ENCODE measurements at regions of chr7 and their contacts with region 1.

Region 1: DNA sequence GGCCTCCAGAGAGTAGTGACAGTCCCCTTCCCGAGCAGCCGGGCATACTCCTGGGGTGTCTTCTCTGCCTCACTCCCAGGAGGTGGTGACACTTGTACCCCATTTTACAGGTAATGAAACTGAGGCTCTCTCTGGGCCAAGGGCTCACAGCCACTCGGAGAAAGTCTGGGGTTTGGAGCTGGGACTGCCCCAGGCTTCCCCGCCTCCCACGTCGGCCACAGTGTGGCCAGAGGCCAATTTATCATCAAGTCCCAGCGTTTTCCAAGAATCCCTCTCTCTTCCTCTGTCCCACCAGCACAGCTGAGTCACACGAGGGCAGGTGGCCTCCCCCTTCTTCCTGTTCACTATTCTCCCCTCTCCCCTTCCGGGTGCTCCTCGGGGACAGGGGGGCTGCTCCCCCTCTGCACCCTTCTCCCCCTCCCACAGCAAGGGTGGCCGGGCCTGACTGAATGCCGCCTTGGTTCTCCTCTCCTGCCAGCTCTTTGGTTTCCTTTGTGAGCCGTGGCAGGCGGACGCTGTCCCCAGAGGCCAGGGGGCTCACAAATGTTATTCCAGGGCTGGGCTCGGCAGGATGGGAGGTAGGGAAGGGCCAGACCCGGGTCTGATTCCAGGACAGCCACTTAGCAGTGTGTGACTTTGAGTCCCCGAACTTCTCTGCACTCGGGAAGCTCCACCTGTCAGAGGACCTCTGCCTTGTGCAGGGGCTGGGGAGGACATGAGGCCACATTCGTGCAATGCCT is 17.7 kb downstream of the CLIP2 start:
- DNase-seq: no peak
- ATAC-seq: peak; percentile 34
- H3K4me3 Mint-ChIP-seq: peak overlapping the region; percentile 64
- H3K27ac Mint-ChIP-seq: no peak overlapping the region
- H3K4me1 Mint-ChIP-seq: peaks cover 37% of the 10 kb centered on the region
- H3K27me3 Mint-ChIP-seq: no peaks in the 10 kb centered on the region
- CTCF ChIP-seq: no peak

Region 2: DNA sequence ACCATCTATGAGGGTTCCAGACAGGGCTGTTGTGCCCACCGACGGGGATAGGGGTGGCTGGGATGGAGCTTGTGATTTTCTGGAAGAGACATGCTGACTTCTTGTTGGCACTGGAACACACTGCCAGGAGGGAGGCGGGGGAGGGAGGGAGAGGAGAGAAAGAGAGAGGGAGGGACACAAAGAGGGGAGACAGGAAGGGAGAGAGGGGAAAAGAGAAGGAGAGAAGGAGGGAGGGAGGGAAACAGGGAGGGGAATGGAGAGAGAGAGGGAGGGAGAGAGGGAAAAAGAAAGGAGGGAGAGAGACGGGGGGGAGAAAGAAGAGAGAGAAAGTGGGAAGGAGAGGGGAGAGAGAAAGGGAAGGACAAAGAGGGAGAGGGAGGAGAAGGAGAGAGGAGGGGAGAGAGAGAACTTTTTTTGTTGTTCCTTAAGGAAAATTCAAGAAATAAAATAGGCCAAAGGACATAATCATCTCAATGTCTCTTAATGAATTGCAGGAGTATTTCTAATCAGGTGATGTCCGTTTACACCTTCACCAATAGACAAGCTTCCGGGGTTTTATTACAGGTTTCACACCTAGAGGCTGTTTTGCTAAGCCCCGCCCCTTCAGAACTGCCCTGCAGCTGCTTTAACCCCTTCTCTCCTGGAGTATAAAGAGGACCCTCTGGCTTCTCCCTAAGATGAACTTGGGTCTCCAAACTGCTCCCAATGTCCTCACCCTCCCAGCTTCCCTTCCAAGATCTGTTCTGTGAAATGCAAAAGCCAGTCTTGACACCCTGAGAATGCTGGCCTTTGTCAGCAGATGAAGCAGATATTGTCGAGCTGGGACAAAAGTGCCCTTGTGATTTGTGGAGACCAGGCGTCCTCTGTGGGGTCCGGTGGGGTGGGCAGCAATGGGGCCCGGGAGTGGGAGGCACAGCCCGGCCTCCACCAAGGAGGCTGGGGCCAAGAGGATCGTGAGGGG is 64.8 kb after region 1 on chr7:
- CTCF ChIA-PET with region 1: no interaction called
- POLR2A ChIA-PET with region 1: no interaction called
- intact Hi-C with region 1: loop called (anchors 5 kb)
- DNase-seq: no peak
- ATAC-seq: no peak
- H3K4me3 Mint-ChIP-seq: no peak overlapping the region
- H3K27ac Mint-ChIP-seq: no peak overlapping the region
- H3K4me1 Mint-ChIP-seq: peaks cover 16% of the 10 kb centered on the region
- H3K27me3 Mint-ChIP-seq: no peaks in the 10 kb centered on the region
- CTCF ChIP-seq: no peak

Measured in activated B cell treated with CpG ODN at 0.5 μM for 24 hours (primary cell).